Gastrocnemius medialis (tissue), 4 donors: ENCODE measurements at regions of chr10 and their contacts with region 1.

Region 1: GRCh38 chr10:30433730-30434272 is at the start of gene MAP3K8:
- DNase-seq: peak; percentile 81 to 84
- ATAC-seq: peak; percentile 77 to 78
- H3K4me3 ChIP-seq: peak within 1 kb of the TSS; percentile 85 to 96 (median 90)
- H3K27ac ChIP-seq: peak within 1 kb of the TSS; percentile 94 to 98 (median 97)
- H3K4me1 ChIP-seq: peaks cover 36 to 49% of the 10 kb centered on the region in 2 donors
- H3K27me3 ChIP-seq: no peaks in the 10 kb centered on the region
- CTCF ChIP-seq: no peak
- POLR2A ChIP-seq: peak; percentile 61 to 79
- total RNA-seq, gene MAP3K8: 3.2 to 5.3 (median 4.2) TPM

Region 2: GRCh38 chr10:30188101-30188500 is 245.7 kb before region 1 on chr10:
- in situ Hi-C with region 1: no loop called
- intact Hi-C with region 1: no loop called
- DNase-seq: no peak
- ATAC-seq: peak; percentile 53 to 57
- H3K4me3 ChIP-seq: peak overlapping the region in 1 of 4 donors; percentile 10
- H3K27ac ChIP-seq: peak overlapping the region; percentile 59 to 74 (median 67)
- H3K4me1 ChIP-seq: peaks cover 0 to 3% of the 10 kb centered on the region in 2 donors
- H3K27me3 ChIP-seq: no peaks in the 10 kb centered on the region
- CTCF ChIP-seq: no peak
- POLR2A ChIP-seq: no peak

Region 3: GRCh38 chr10:30348378-30348776 is 85.4 kb before region 1 on chr10:
- in situ Hi-C with region 1: no loop called
- intact Hi-C with region 1: loop called (anchors 5 kb)
- DNase-seq: no peak
- ATAC-seq: peak in 1 of 2 donors; percentile 14
- H3K4me3 ChIP-seq: peak overlapping the region; percentile 69 to 86 (median 79)
- H3K27ac ChIP-seq: peak overlapping the region; percentile 86 to 95 (median 92)
- H3K4me1 ChIP-seq: peaks cover 32 to 38% of the 10 kb centered on the region in 2 donors
- H3K27me3 ChIP-seq: no peaks in the 10 kb centered on the region
- CTCF ChIP-seq: no peak
- POLR2A ChIP-seq: no peak

Region 4: GRCh38 chr10:30455816-30456215 is 22.0 kb after region 1 on chr10:
- in situ Hi-C with region 1: no loop called
- intact Hi-C with region 1: loop called (anchors 2 kb)
- DNase-seq: no peak
- ATAC-seq: no peak
- H3K4me3 ChIP-seq: no peak overlapping the region
- H3K27ac ChIP-seq: peak overlapping the region; percentile 43 to 73 (median 68)
- H3K4me1 ChIP-seq: peaks cover 23 to 30% of the 10 kb centered on the region in 2 donors
- H3K27me3 ChIP-seq: no peaks in the 10 kb centered on the region
- CTCF ChIP-seq: no peak
- POLR2A ChIP-seq: no peak

Region 5: GRCh38 chr10:30510169-30510930 is 76.5 kb after region 1 on chr10:
- in situ Hi-C with region 1: no loop called
- intact Hi-C with region 1: loop called (anchors 2 kb)
- DNase-seq: peak; percentile 61 to 69
- ATAC-seq: peak; percentile 97 to 99
- H3K4me3 ChIP-seq: no peak overlapping the region
- H3K27ac ChIP-seq: peak overlapping the region in 2 of 4 donors; percentile 31 to 58
- H3K4me1 ChIP-seq: peaks cover 17 to 22% of the 10 kb centered on the region in 2 donors
- H3K27me3 ChIP-seq: no peaks in the 10 kb centered on the region
- CTCF ChIP-seq: peak in 1 of 5 experiments; percentile 18
- POLR2A ChIP-seq: no peak